Natural killer cell (primary cell): ENCODE measurements at regions of chr2 and their contacts with region 1.

Region 1: DNA sequence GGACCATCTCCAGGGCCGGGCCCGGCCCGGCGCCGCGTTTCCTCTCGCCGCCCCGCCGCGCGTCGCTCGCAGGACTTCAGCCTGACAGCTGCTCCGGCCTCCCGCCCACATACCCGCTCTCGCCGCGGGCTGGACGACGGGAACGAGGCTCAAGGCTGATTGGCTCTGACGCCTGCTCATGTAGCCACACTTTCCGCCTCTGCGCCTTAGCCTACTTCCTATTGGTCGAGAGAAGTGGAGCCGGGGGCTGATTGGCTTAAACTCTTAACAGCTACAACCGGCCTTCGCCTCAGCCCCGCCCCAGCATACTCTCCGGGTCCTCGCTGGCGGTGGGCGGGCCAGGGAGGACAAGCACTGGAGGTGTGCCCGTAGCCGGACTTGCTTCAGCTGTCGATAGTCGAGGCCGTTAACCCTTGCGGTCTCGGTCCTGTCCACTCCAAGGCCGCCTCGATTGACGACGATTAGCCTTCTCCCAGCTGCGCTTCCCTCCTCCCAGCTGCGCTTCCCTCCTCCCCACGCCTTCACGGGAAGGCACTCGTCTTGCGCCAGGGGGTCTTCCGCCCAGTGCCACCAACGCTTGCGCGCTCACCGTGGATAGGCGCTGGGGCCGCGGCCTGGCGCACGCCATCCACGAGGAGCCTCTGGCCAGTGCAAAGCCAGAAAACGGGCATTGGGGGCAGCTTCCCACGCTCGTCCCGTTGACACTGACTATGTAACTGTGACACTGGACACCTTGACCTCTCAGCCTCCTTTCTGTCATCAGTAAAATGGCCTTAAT is at the start of gene PRADC1:
- DNase-seq: peak; percentile 95 to 97
- ATAC-seq: peak; percentile 81 to 91 (median 82)
- H3K4me3 ChIP-seq: peak within 1 kb of the TSS; percentile 97
- H3K4me3 Mint-ChIP-seq: peak within 1 kb of the TSS; percentile 96
- H3K27ac ChIP-seq: peak within 1 kb of the TSS; percentile 83
- H3K27ac Mint-ChIP-seq: peak within 1 kb of the TSS; percentile 94 to 96
- H3K4me1 ChIP-seq: peaks cover 17% of the 10 kb centered on the region
- H3K4me1 Mint-ChIP-seq: peaks cover 34 to 47% of the 10 kb centered on the region in 2 donors
- H3K27me3 ChIP-seq: no peaks in the 10 kb centered on the region
- H3K27me3 Mint-ChIP-seq: no peaks in the 10 kb centered on the region
- CTCF ChIP-seq: no peak
- total RNA-seq, gene PRADC1: 8.3 to 9.7 (median 9.1) TPM

Region 2: GRCh38 chr2:73006969-73007710 is 226.2 kb before region 1 on chr2:
- intact Hi-C with region 1: no loop called
- DNase-seq: no peak
- ATAC-seq: no peak
- H3K4me3 ChIP-seq: no peak overlapping the region
- H3K4me3 Mint-ChIP-seq: no peak overlapping the region
- H3K27ac ChIP-seq: no peak overlapping the region
- H3K27ac Mint-ChIP-seq: no peak overlapping the region
- H3K4me1 ChIP-seq: no peaks in the 10 kb centered on the region
- H3K4me1 Mint-ChIP-seq: no peaks in the 10 kb centered on the region
- H3K27me3 ChIP-seq: no peaks in the 10 kb centered on the region
- H3K27me3 Mint-ChIP-seq: no peaks in the 10 kb centered on the region
- CTCF ChIP-seq: no peak

Region 3: GRCh38 chr2:73071360-73072133 is 161.8 kb before region 1 on chr2 and contains the start of gene SFXN5:
- intact Hi-C with region 1: loop called (anchors 1 kb)
- DNase-seq: peak; percentile 95 to 99
- ATAC-seq: peak; percentile 86 to 94 (median 89)
- H3K4me3 ChIP-seq: peak within 1 kb of the TSS; percentile 98
- H3K4me3 Mint-ChIP-seq: peak within 1 kb of the TSS; percentile 93
- H3K27ac ChIP-seq: peak within 1 kb of the TSS; percentile 95
- H3K27ac Mint-ChIP-seq: peak within 1 kb of the TSS; percentile 91 to 92
- H3K4me1 ChIP-seq: peaks cover 16% of the 10 kb centered on the region
- H3K4me1 Mint-ChIP-seq: peaks cover 38 to 40% of the 10 kb centered on the region in 2 donors
- H3K27me3 ChIP-seq: no peaks in the 10 kb centered on the region
- H3K27me3 Mint-ChIP-seq: no peaks in the 10 kb centered on the region
- CTCF ChIP-seq: no peak
- total RNA-seq, gene SFXN5: 15.3 to 22.3 (median 19.8) TPM

Region 4: GRCh38 chr2:73131807-73132206 is 101.5 kb before region 1 on chr2:
- intact Hi-C with region 1: no loop called
- DNase-seq: no peak
- ATAC-seq: no peak
- H3K4me3 ChIP-seq: no peak overlapping the region
- H3K4me3 Mint-ChIP-seq: no peak overlapping the region
- H3K27ac ChIP-seq: no peak overlapping the region
- H3K27ac Mint-ChIP-seq: no peak overlapping the region
- H3K4me1 ChIP-seq: no peaks in the 10 kb centered on the region
- H3K4me1 Mint-ChIP-seq: no peaks in the 10 kb centered on the region
- H3K27me3 ChIP-seq: no peaks in the 10 kb centered on the region
- H3K27me3 Mint-ChIP-seq: peaks cover 20 to 27% of the 10 kb centered on the region in 2 donors
- CTCF ChIP-seq: no peak

Region 5: DNA sequence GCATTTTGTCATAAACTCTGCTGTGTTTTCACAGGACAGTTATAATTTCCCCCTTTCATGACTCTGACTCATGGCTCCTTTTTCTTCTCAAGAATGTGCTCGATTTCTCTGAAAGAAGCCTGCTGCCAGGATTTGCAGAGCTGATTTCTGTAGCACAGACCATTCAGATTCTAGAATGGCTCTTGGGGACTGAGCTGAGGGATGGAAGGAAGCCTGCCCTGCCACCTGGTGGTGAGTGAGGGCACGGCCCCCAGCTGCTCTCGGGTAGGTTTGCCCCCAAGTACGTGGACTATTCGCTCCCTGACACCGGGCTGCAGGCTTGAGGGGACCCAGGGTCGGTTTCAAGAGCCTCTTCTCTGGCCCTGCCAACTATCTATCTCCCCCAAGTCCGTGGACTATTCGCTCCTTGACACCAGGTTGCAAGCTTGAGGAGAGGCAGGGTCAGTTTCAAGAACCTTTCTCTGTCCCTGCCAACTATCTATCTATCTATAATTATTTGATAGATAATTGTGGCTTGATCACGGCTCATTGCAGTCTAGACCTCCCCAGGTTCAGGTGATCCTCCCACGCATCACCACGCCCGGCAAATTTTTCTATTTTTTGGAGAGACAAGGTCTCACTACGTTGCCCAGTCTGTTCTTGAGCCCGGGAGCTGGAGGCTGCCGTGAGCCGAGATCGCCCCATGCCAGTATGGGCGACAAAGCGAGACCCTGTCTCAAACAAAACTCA is 20.7 kb before region 1 on chr2:
- intact Hi-C with region 1: loop called (anchors 1 kb)
- DNase-seq: peak; percentile 68 to 87
- ATAC-seq: peak; percentile 69 to 78 (median 76)
- H3K4me3 ChIP-seq: no peak overlapping the region
- H3K4me3 Mint-ChIP-seq: no peak overlapping the region
- H3K27ac ChIP-seq: no peak overlapping the region
- H3K27ac Mint-ChIP-seq: no peak overlapping the region
- H3K4me1 ChIP-seq: peaks cover 21% of the 10 kb centered on the region
- H3K4me1 Mint-ChIP-seq: peaks cover 17 to 26% of the 10 kb centered on the region in 2 donors
- H3K27me3 ChIP-seq: no peaks in the 10 kb centered on the region
- H3K27me3 Mint-ChIP-seq: peaks cover 8 to 14% of the 10 kb centered on the region in 2 donors
- CTCF ChIP-seq: peak; percentile 94

Region 6: DNA sequence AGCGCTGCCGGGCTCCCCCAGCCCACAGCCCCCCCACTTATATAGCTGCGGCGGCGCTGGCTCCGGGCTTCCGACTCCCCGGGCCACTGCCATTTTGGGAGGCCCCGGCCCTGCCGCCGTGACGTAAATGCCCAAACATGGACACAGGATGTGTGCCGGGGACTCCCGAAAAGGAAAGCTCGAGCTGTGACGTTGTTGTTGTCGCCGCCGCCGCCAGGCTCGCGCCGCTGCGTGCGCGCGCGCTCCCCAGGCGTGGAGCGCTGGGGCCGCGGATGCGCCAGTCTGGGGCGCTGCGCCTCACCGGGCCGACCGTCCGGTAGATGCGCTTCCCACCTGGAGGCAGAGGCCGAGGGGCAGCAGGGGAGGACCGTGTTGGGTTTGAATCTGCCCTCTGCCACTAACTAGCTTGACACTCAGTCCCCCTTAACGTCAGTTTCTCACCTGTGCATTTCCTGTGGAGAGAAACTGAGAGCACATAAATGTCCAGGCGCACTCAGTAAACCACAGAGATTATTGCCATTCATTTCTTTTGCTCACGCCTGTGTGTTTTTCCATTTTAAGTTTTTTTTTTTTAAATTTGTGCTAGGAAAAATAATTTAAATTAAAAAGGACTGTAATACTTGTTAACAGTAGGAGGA is 60.3 kb after region 1 on chr2 and contains the start of gene EGR4:
- intact Hi-C with region 1: loop called (anchors 1 kb)
- DNase-seq: peak; percentile 85 to 95
- ATAC-seq: peak; percentile 93 to 95 (median 94)
- H3K4me3 ChIP-seq: peak within 1 kb of the TSS; percentile 30
- H3K4me3 Mint-ChIP-seq: peak within 1 kb of the TSS; percentile 72
- H3K27ac ChIP-seq: no peak within 1 kb of the TSS
- H3K27ac Mint-ChIP-seq: peak within 1 kb of the TSS in 1 of 2 donors; percentile 75
- H3K4me1 ChIP-seq: peaks cover 26% of the 10 kb centered on the region
- H3K4me1 Mint-ChIP-seq: peaks cover 7 to 8% of the 10 kb centered on the region in 2 donors
- H3K27me3 ChIP-seq: peaks cover 63% of the 10 kb centered on the region
- H3K27me3 Mint-ChIP-seq: peaks cover 59 to 62% of the 10 kb centered on the region in 2 donors
- CTCF ChIP-seq: no peak
- total RNA-seq, gene EGR4: 0.28 to 2.6 (median 1.1) TPM

Region 7: GRCh38 chr2:73385595-73386341 is 152.4 kb after region 1 on chr2 and contains the start of gene ALMS1:
- intact Hi-C with region 1: loop called (anchors 2 kb)
- DNase-seq: peak; percentile 81 to 96
- ATAC-seq: peak; percentile 87 to 96 (median 88)
- H3K4me3 ChIP-seq: peak within 1 kb of the TSS; percentile 95
- H3K4me3 Mint-ChIP-seq: peak within 1 kb of the TSS; percentile 87
- H3K27ac ChIP-seq: peak within 1 kb of the TSS; percentile 89
- H3K27ac Mint-ChIP-seq: peak within 1 kb of the TSS; percentile 91
- H3K4me1 ChIP-seq: peaks cover 13% of the 10 kb centered on the region
- H3K4me1 Mint-ChIP-seq: peaks cover 19 to 30% of the 10 kb centered on the region in 2 donors
- H3K27me3 ChIP-seq: no peaks in the 10 kb centered on the region
- H3K27me3 Mint-ChIP-seq: peaks cover 17 to 27% of the 10 kb centered on the region in 2 donors
- CTCF ChIP-seq: no peak
- total RNA-seq, gene ALMS1: 22.9 to 33.8 (median 26.9) TPM

Region 8: DNA sequence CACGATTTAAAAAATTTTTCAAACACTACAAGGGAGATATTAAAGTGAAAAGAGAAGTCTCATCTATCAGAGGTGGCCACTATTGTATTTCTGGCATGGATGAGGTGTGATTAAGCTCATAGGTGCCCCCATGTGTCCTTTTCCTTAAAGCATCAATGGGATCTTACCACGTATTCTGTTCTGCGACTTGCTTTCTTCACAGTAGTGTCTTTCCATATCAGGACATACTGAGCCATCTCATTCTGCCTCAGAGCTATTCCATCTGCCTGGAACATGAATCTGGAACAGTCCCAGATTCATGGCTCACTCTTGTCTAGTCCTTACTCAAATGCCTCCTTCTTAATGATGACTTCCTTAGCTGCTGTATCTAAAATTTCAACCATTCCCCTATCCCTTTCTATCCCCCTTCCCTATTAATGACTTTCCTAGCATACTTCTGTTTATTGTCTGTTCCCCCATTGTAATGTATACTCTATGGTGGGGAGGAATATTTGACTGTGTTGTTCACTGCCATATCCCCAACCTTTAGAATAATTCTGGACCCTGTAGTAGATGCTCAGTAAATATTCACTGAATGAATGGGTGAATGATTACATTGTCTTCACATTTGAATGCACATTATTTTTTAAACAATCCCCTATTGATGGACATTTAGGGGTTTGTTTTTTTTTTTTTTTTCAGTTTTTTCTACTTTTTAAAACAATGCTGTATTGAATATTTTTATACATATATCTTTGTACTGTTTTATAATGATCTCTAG is 606.5 kb after region 1 on chr2:
- intact Hi-C with region 1: no loop called
- DNase-seq: no peak
- ATAC-seq: no peak
- H3K4me3 ChIP-seq: no peak overlapping the region
- H3K4me3 Mint-ChIP-seq: no peak overlapping the region
- H3K27ac ChIP-seq: no peak overlapping the region
- H3K27ac Mint-ChIP-seq: no peak overlapping the region
- H3K4me1 ChIP-seq: no peaks in the 10 kb centered on the region
- H3K4me1 Mint-ChIP-seq: peaks cover 19 to 36% of the 10 kb centered on the region in 2 donors
- H3K27me3 ChIP-seq: no peaks in the 10 kb centered on the region
- H3K27me3 Mint-ChIP-seq: no peaks in the 10 kb centered on the region
- CTCF ChIP-seq: no peak